AG04449 (cell line): ENCODE measurements at regions of chr6 and their contacts with region 1.

Region 1: GRCh38 chr6:134174672-134175198 is 122.3 kb upstream of the SLC2A12 start:
- DNase-seq: no peak
- H3K4me3 ChIP-seq: peak overlapping the region; percentile 90
- CTCF ChIP-seq: no peak

Region 2: GRCh38 chr6:134216301-134217010 is 41.7 kb after region 1 on chr6:
- CTCF ChIA-PET with region 1: interaction called, 11 read pairs
- POLR2A ChIA-PET with region 1: no interaction called
- DNase-seq: no peak
- H3K4me3 ChIP-seq: no peak overlapping the region
- CTCF ChIP-seq: no peak

Region 3: GRCh38 chr6:134289204-134289575 is 114.5 kb after region 1 on chr6:
- CTCF ChIA-PET with region 1: interaction called, 11 read pairs
- POLR2A ChIA-PET with region 1: no interaction called
- DNase-seq: peak; percentile 14
- H3K4me3 ChIP-seq: no peak overlapping the region
- CTCF ChIP-seq: no peak

Region 4: GRCh38 chr6:134420614-134421181 is 246.0 kb after region 1 on chr6:
- CTCF ChIA-PET with region 1: interaction called, 15 read pairs
- POLR2A ChIA-PET with region 1: interaction called, 11 read pairs
- DNase-seq: no peak
- H3K4me3 ChIP-seq: no peak overlapping the region
- CTCF ChIP-seq: no peak